Endothelial cell of umbilical vein (primary cell): ENCODE measurements at regions of chr5 and their contacts with region 1.

Region 1: GRCh38 chr5:57173185-57174127 is at the start of gene GPBP1:
- DNase-seq: peak; percentile 99
- H3K4me3 ChIP-seq: peak within 1 kb of the TSS; percentile 77 to 96 (median 86)
- H3K27ac ChIP-seq: peak within 1 kb of the TSS; percentile 94
- H3K4me1 ChIP-seq: peaks cover 32% of the 10 kb centered on the region
- H3K27me3 ChIP-seq: no peaks in the 10 kb centered on the region
- CTCF ChIP-seq: peak in 1 of 2 donors; percentile 1
- POLR2A ChIP-seq: no peak
- total RNA-seq, gene GPBP1: 48.2 and 57.4 TPM in 2 replicates

Region 2: DNA sequence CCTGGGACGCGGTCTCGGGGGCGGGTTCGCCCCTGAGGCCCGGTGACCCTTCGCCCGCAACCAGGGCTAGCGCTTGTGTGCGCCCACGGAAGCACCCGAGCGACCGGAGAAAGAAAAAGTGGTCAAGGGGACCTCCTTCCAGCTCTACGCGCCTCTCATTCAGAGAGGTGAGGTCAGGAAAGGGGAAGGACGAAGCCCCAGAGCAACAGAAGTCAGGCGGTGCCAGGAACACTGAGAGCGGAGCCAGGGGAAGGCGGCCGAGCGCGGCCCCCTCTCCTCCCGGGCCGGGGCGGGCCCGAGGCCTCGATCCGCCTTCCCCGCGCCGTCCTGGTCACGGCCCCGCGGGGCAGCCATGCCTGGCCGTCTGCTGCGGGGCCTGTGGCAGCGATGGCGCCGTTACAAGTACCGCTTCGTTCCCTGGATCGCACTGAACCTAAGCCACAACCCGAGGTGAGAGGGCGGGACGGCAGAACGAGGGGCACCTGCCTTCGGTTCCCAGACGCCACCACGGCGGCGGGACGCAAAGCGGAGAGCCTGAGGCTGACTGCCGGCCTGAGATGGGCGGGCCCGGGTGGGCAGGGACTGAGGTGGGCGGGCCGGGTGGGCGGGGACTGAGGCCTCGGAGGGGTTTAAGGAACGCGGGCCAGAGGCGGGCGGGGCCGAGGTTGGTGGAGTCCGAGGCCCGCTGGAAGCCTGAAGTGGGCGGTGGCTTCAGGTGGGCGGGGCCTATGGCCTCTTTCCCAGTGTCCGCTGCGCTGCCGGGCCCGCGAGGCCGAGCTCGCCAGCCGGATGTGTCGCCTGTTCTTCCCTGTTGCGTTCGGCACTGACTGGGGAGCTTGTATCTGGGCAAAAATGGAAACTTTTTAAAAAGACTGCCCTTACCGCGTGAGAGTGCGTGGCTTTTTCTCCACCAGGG is 263.9 kb before region 1 on chr5 and contains the start of gene SETD9:
- CTCF ChIA-PET with region 1: interaction called, 3 read pairs
- POLR2A ChIA-PET with region 1: no interaction called
- dilution Hi-C with region 1: no loop called
- intact Hi-C with region 1: loop called (anchors 1 kb)
- DNase-seq: peak; percentile 98
- H3K4me3 ChIP-seq: peak within 1 kb of the TSS; percentile 36 to 81 (median 63)
- H3K27ac ChIP-seq: peak within 1 kb of the TSS; percentile 93
- H3K4me1 ChIP-seq: peaks cover 9% of the 10 kb centered on the region
- H3K27me3 ChIP-seq: peaks cover 0 to 3% of the 10 kb centered on the region in 2 experiments
- CTCF ChIP-seq: no peak
- POLR2A ChIP-seq: peak; percentile 97
- total RNA-seq, gene SETD9: 3.6 and 7.1 TPM in 2 replicates

Region 3: DNA sequence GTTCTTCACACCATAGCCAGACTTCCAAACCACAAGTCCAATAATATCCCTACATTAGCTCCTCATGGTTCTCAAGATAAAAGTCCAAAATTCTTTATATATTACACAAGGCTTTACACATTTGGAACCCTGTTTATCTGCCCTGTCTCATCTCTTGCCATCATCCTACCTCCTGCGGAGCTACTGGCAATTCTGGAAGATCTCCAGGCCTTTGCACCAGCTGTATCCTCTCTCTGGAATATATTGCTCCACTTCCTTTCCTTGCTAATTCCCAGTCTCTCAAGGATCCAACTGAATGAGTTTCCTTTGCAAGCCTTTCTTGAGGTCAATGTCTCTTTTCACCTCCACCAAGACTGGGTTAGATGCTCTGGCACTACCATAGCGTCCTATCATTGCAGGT is 180.2 kb before region 1 on chr5:
- CTCF ChIA-PET with region 1: no interaction called
- POLR2A ChIA-PET with region 1: no interaction called
- dilution Hi-C with region 1: no loop called
- intact Hi-C with region 1: no loop called
- DNase-seq: no peak
- H3K4me3 ChIP-seq: no peak overlapping the region
- H3K27ac ChIP-seq: no peak overlapping the region
- H3K4me1 ChIP-seq: no peaks in the 10 kb centered on the region
- H3K27me3 ChIP-seq: peaks cover 6 to 12% of the 10 kb centered on the region in 2 experiments
- CTCF ChIP-seq: no peak
- POLR2A ChIP-seq: no peak

Region 4: DNA sequence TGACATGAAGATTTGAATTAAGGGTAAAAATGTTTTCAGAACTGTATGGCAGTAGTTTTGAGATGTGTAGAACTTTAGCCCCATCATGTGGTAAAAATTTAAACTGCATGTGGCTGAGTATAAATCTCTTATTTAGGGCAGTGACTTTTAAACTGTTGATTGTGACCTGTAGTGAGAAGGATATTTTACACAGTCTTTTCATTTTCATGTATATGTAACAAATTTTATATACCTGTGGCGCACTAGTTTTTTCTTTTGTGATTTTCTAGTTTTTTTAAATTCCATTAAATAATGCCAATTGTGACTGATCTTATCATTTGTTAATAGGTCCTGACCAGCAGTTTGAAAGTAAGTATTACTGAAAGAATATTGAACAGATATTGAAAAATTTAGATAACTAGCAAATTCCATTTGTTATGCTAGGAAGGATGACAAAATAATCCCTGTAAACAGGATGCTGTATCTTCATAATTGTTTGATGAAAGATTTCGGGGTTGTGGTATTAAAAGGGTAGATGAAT is 47.7 kb after region 1 on chr5:
- CTCF ChIA-PET with region 1: interaction called, 10 read pairs
- POLR2A ChIA-PET with region 1: no interaction called
- dilution Hi-C with region 1: no loop called
- intact Hi-C with region 1: loop called (anchors 2 kb)
- DNase-seq: peak; percentile 83
- H3K4me3 ChIP-seq: no peak overlapping the region
- H3K27ac ChIP-seq: no peak overlapping the region
- H3K4me1 ChIP-seq: peaks cover 3% of the 10 kb centered on the region
- H3K27me3 ChIP-seq: no peaks in the 10 kb centered on the region
- CTCF ChIP-seq: peak; percentile 38 to 45
- POLR2A ChIP-seq: no peak

Region 5: GRCh38 chr5:57456531-57457135 is 283.2 kb after region 1 on chr5:
- CTCF ChIA-PET with region 1: no interaction called
- POLR2A ChIA-PET with region 1: no interaction called
- dilution Hi-C with region 1: no loop called
- intact Hi-C with region 1: no loop called
- DNase-seq: peak; percentile 53
- H3K4me3 ChIP-seq: no peak overlapping the region
- H3K27ac ChIP-seq: no peak overlapping the region
- H3K4me1 ChIP-seq: peaks cover 8% of the 10 kb centered on the region
- H3K27me3 ChIP-seq: no peaks in the 10 kb centered on the region
- CTCF ChIP-seq: no peak
- POLR2A ChIP-seq: no peak